Heart right ventricle (tissue), 16 donors: ENCODE measurements at regions of chr2 and their contacts with region 1.

Region 1: GRCh38 chr2:145339646-145340045 is 819.7 kb upstream of the ZEB2 start:
- DNase-seq: no peak
- ATAC-seq: no peak
- H3K4me3 ChIP-seq: no peak overlapping the region
- H3K27ac ChIP-seq: peak overlapping the region in 1 of 10 donors; percentile 23
- H3K4me1 ChIP-seq: no peaks in the 10 kb centered on the region
- H3K27me3 ChIP-seq: no peaks in the 10 kb centered on the region
- CTCF ChIP-seq: no peak

Region 2: DNA sequence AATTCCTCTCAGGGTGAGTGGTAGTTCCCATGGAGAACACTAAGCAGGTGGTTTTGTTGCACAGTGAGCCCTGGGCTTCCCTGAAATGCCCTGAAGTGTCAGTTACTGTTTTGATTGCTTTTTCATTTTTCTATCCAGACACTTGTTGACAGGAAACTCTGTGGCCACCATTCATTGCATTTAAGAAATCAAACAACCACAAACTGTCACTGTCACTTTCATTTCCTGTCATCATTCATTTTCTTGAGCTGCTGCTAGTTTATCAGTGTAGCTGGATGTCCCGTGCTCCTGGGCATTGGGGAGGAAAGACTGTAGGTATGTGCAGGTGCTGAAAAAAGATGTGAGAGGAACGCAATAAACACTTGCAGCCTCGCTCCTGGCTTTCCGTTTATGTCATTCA is 71.8 kb after region 1 on chr2:
- intact Hi-C with region 1: loop called in 1 of 10 experiments (anchors 2 kb)
- DNase-seq: no peak
- ATAC-seq: no peak
- H3K4me3 ChIP-seq: no peak overlapping the region
- H3K27ac ChIP-seq: no peak overlapping the region
- H3K4me1 ChIP-seq: peaks cover 0 to 7% (median 0%) of the 10 kb centered on the region in 9 donors
- H3K27me3 ChIP-seq: no peaks in the 10 kb centered on the region
- CTCF ChIP-seq: no peak